ENCODE measurements at regions of chr15 and their contacts with region 1.

Region 1: DNA sequence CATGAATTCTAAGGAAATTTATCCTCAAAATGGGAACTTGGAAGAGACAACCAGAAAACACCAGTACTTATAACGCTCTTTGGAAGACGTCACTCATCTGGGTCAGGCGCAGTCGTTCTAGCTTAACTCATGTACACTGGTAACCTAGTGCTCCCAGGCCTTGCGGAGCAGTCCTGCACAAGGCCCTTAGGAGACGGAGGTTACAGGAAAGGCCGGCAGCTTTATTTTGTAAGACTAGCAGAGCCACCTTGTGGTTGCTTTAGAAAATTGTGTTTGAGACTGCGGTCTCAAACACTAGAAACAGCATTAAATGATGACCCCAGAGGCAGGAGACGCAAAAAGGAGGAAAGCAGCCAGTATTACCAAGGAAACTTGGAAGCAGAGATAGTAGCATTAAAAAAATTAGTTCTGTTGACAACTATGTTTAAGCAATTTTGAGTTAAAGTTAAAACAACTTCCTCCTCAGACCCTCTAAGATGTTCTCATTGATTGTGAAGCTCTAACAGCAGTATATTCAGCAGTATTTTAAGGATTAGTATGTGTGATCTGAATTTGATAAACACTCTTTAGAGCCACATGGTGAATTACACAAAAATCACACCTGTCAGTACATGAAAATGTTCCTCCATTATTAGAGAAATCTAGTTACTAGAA is 141.9 kb upstream of the C2CD4B start:
- DNase-seq: peak; percentile 73
- ATAC-seq: peak; percentile 96
- H3K4me3 ChIP-seq: no peak overlapping the region
- H3K27ac ChIP-seq: no peak overlapping the region
- H3K4me1 ChIP-seq: no peaks in the 10 kb centered on the region
- H3K27me3 ChIP-seq: peaks cover 1 to 15% of the 10 kb centered on the region in 2 experiments; a peak in 3 of 5 replicates
- CTCF ChIP-seq: peak; percentile 79
- EP300 ChIP-seq: no peak
- POLR2A ChIP-seq: no peak
- RAD21 ChIP-seq: peak; percentile 69

Region 2: GRCh38 chr15:62241135-62241770 is 65.7 kb before region 1 on chr15:
- CTCF ChIA-PET with region 1: interaction called, 4 read pairs
- POLR2A ChIA-PET with region 1: no interaction called
- in situ Hi-C with region 1: no loop called
- intact Hi-C with region 1: loop called (anchors 1 kb)
- DNase-seq: peak; percentile 32
- ATAC-seq: peak; percentile 93
- H3K4me3 ChIP-seq: no peak overlapping the region
- H3K27ac ChIP-seq: no peak overlapping the region
- H3K4me1 ChIP-seq: no peaks in the 10 kb centered on the region
- H3K27me3 ChIP-seq: peaks cover 0 to 11% of the 10 kb centered on the region in 2 experiments; a peak in 3 of 5 replicates
- CTCF ChIP-seq: peak; percentile 57
- EP300 ChIP-seq: no peak
- POLR2A ChIP-seq: no peak
- RAD21 ChIP-seq: 0 out of 2 replicates have a peak, but pooled peaks have one; percentile 16